GM10248 (cell line): ENCODE measurements at regions of chr6 and their contacts with region 1.

Region 1: DNA sequence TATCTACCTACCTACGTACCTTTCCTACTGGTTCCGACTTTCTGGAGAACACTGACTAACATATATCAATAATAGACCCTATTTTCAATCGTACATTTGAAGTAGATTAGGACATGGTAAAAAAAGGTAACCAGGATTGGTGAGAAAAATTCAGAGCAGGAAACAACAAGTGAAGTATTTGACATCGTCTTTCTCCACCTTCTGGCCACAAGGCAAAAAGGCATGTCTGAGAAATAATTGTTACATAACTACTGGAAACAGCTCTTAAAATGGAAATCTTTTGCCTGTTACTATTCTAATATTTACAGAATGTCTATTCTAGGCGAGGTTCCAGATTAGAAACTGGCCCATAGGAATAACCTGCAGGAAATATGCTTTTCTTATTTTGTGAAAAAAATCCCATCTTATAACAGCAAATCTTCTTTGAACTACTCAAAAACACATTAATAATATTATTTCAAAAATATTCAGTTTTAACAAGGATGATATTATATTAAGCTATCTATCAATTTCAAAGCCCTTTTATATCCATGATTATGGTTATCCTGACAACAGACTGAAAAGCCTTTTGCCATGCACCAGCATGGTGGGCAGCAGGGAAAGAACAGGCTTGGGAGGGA is 80.8 kb downstream of the RCAN2 start:
- DNase-seq: peak; percentile 50
- CTCF ChIP-seq: peak; percentile 68

Region 2: DNA sequence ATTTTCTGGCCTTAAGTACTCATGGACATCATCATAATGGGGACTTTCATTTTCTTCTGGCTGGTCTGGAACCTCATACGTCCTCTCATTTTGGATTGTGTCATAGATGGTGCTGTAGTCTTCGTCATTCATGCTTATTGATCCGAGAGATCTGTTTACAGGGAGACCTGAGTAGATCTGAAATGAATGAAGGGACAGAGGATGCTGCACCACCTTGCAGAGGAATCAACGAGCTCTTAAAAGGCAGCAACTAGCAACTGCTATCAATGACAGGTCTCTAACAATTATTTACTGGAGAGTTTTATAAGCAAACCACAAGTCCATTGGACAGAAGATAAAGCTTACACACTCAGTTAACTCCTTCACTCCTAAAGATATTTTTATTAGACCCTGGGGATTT is 330.3 kb before region 1 on chr6:
- CTCF ChIA-PET with region 1: interaction called, 10 read pairs
- POLR2A ChIA-PET with region 1: no interaction called
- DNase-seq: no peak
- CTCF ChIP-seq: no peak

Region 3: DNA sequence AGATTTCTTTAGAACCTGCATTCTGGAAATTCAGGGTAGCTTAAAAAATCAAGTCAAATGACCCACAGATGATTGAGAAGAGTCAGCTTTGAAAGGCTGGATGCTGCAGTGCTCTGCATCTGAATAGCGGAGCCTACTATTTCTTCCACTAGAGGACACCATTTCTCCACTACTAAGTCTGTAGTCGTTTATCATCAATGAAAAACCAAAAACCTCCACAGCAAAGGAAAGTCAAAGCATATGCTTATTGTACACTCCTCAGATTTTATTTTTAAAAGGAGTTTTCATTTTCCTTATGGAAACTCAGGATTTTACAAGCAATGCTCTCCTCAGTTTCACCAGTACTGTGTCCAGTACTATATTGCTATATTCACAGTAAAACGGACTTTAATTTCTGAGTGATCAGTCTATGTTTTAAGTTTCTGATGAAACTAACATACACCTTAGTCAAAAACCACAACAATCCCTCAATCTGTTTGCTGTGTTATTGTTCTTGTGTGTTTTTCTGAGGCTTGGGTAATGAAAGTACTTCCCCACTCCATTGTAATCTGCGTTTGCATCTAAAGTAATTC is 189.1 kb before region 1 on chr6:
- CTCF ChIA-PET with region 1: interaction called, 139 read pairs
- POLR2A ChIA-PET with region 1: no interaction called
- DNase-seq: peak; percentile 44
- CTCF ChIP-seq: peak; percentile 71

Region 4: GRCh38 chr6:46390153-46390876 is 20.1 kb before region 1 on chr6:
- CTCF ChIA-PET with region 1: interaction called, 10 read pairs
- POLR2A ChIA-PET with region 1: no interaction called
- DNase-seq: no peak
- CTCF ChIP-seq: no peak